Gastrocnemius medialis (tissue), 4 donors: ENCODE measurements at regions of chr2 and their contacts with region 1.

Region 1: DNA sequence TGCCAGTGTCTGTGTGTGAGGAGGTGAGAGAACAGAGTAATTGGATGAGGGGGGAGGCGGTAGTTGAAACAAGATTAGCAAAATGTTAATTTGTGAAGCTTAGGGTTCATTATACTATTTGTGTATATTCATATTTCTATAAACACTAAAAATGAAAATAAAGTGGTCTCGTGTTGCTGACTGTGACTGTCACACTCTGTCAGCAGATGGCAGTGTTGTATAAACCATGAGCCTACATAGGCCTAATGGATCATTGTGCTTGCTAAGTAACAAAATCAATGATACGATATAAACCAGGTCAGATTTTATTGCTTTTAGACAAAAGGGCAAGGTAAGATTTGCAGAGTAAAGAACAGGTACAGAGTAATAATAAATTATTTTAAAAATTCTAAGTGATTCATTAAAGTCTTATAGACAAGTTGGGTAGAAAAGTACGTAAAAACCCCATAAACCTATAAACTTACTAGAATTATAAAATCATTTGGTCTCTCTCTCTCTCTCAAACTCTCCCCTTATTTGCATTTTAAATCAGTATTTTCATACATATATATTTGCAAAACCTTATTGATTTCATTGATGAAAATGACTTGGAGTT is 182.7 kb downstream of the RPIA start:
- DNase-seq: no peak
- ATAC-seq: peak in 1 of 2 donors; percentile 72
- H3K4me3 ChIP-seq: no peak overlapping the region
- H3K27ac ChIP-seq: no peak overlapping the region
- H3K4me1 ChIP-seq: no peaks in the 10 kb centered on the region
- H3K27me3 ChIP-seq: peaks cover 0 to 3% (median 0%) of the 10 kb centered on the region in 3 donors
- CTCF ChIP-seq: peak; percentile 46 to 72 (median 62)
- POLR2A ChIP-seq: no peak

Region 2: GRCh38 chr2:88355486-88355885 is 518.7 kb before region 1 on chr2:
- in situ Hi-C with region 1: no loop called
- intact Hi-C with region 1: no loop called
- DNase-seq: no peak
- ATAC-seq: no peak
- H3K4me3 ChIP-seq: no peak overlapping the region
- H3K27ac ChIP-seq: no peak overlapping the region
- H3K4me1 ChIP-seq: no peaks in the 10 kb centered on the region
- H3K27me3 ChIP-seq: peaks cover 6 to 8% (median 7%) of the 10 kb centered on the region in 3 donors
- CTCF ChIP-seq: no peak
- POLR2A ChIP-seq: no peak

Region 3: DNA sequence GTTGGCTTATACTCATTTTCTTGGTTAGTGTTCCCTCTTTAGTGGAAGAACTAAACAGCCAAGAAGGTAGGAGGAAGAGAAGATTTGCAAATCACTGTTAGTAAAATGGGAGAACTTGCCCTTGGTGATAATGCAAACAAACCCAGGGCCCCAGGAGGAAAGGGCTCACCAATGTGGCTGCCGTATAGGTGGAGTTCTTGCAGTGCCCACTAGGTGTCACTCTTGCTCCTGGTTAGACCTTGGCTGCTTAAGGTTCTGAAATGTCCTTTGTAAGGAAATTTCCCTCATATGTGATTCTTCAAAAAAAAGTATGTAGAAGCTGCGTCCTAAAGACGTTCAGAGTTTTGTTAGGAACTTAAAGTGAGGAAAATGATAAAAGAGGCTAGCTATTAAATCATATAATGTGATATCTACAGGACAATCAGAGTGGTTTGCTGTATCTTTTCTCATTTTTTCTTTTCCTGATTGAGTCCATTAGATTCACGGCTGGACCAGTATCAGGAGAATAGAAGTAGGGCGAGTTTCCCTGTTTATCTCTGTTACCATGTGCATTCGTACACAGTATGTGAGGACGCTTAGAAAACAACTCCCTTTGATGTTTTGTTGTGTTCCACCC is 134.1 kb before region 1 on chr2:
- in situ Hi-C with region 1: no loop called
- intact Hi-C with region 1: loop called (anchors 10 kb)
- DNase-seq: peak in 1 of 2 donors; percentile 52
- ATAC-seq: peak in 1 of 2 donors; percentile 35
- H3K4me3 ChIP-seq: no peak overlapping the region
- H3K27ac ChIP-seq: peak overlapping the region in 3 of 4 donors; percentile 14 to 73 (median 66)
- H3K4me1 ChIP-seq: peaks cover 12 to 26% of the 10 kb centered on the region in 2 donors
- H3K27me3 ChIP-seq: no peaks in the 10 kb centered on the region
- CTCF ChIP-seq: peak; percentile 73 to 92 (median 77)
- POLR2A ChIP-seq: no peak